ENCODE measurements at regions of chr2 and their contacts with region 1.

Region 1: GRCh38 chr2:102240640-102241370 is 54.0 kb downstream of the IL1RL2 start:
- DNase-seq: peak; percentile 92
- ATAC-seq: peak; percentile 97
- H3K4me3 Mint-ChIP-seq: peak overlapping the region; percentile 16
- H3K27ac Mint-ChIP-seq: peak overlapping the region; percentile 71
- H3K4me1 Mint-ChIP-seq: peaks cover 38% of the 10 kb centered on the region
- H3K27me3 Mint-ChIP-seq: no peaks in the 10 kb centered on the region

Region 2: DNA sequence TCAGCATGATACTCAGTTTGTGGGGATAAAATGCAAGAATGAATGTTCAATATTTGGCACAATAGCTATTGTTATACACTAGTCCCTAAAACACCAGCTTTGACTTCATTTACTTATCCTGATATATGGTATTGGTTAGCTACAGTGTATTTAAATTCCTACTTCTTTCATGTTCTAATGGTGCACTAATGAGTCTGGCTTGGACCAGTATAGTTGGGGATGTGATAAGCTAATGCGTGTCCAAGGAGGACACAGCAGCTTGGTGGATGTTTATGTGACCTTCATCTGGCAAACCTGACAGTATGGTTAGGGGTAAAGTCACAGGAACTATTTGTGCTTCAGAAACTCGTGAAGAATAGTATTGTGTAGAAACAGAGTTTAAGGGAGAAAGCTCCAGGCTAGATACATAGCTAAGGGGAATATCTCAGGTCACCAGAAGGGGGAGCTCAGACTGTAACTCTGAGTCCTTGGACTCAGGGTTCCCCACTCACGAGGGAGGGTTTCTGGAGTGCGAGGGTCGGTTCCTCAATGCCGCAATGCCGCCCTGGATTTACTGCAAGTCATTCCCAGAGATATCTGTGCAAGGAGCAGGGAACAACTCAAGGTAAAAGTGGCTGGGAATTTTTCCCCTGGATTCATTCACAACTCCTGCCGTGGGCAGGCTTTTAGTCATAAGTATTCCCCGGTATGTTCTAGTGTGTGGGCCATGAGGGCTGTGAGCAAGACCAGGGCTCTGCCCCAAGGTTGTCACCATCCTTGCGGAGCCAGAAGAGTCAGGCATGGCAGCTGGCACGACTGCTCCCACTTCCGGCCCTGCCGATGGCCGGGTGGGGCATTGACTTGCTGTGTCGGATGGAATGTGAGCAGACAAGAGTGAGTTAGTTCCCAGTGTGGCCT is 234.6 kb before region 1 on chr2:
- CTCF ChIA-PET with region 1: interaction called, 77 read pairs
- POLR2A ChIA-PET with region 1: no interaction called
- DNase-seq: peak; percentile 49
- ATAC-seq: peak; percentile 57
- H3K4me3 Mint-ChIP-seq: no peak overlapping the region
- H3K27ac Mint-ChIP-seq: no peak overlapping the region
- H3K4me1 Mint-ChIP-seq: no peaks in the 10 kb centered on the region
- H3K27me3 Mint-ChIP-seq: peaks cover 2% of the 10 kb centered on the region

Region 3: DNA sequence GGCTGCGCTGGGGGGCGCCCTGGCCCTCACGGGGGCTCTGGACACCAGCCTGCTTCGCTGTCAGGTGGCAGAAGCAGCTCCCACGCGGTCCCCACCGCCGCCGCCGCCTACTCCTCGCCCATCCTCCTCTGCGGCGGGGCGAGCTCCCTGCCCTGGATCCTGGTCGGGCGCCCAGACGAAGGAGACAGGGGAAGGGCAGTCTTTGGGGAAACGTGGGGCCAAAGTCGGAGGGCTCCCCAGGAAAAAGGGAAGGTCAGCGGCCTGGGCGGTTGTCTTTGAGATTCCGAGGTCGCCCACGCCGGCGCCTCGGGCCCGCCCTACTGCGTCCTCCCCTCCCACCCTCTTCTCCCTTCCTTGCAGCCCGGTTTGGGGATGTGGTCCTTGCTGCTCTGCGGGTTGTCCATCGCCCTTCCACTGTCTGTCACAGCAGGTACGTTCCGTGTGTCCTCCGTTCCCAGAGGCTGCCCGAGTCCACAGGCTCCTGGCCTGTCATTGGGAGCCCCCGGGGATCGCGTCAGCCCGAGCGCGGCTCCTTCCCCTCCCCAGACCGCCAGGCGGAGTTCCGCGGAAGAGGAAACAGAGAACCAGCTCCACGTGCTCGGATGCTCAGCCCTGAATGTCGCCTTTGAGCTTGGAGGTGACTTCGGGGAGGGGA is 53.2 kb before region 1 on chr2:
- CTCF ChIA-PET with region 1: interaction called, 25 read pairs
- POLR2A ChIA-PET with region 1: no interaction called
- DNase-seq: peak; percentile 28
- ATAC-seq: peak; percentile 80
- H3K4me3 Mint-ChIP-seq: peak overlapping the region; percentile 74
- H3K27ac Mint-ChIP-seq: no peak overlapping the region
- H3K4me1 Mint-ChIP-seq: peaks cover 12% of the 10 kb centered on the region
- H3K27me3 Mint-ChIP-seq: peaks cover 19% of the 10 kb centered on the region

Region 4: DNA sequence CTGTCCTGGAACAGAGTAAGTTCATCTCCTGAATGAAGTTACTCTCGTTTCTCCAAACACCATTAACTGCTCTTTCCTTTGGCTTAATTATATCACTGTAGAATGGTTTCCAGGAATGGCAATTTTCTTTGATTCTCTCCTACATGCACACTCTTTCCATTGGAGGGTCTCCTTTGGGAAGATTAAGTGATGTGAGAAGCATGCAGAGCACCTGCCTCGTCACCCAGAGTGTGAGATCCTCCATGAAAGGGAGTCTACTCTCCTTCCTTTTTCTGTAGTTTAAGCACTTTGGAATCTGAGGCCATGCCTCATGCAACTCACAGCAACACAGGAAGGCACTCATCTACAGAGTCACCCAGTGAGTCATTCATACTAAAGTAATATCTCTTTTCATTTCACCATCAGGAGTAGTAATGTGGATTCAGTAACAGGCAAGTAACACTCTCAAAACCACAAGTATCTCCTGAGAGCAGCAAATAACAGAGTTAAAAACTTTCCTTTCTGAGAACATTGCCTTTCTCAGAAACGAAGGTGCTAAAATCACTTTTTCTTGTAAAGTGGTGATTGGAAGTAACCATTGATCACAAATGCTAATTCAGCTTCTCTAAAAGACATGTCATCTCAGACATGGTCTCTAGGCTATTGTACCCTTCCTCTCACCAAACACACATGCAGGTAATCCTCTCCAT is 17.7 kb after region 1 on chr2:
- CTCF ChIA-PET with region 1: interaction called, 25 read pairs
- POLR2A ChIA-PET with region 1: no interaction called
- DNase-seq: peak; percentile 50
- ATAC-seq: peak; percentile 88
- H3K4me3 Mint-ChIP-seq: peak overlapping the region; percentile 1
- H3K27ac Mint-ChIP-seq: peak overlapping the region; percentile 97
- H3K4me1 Mint-ChIP-seq: peaks cover 53% of the 10 kb centered on the region
- H3K27me3 Mint-ChIP-seq: no peaks in the 10 kb centered on the region

Region 5: GRCh38 chr2:102336502-102336945 is 95.7 kb after region 1 on chr2:
- CTCF ChIA-PET with region 1: interaction called, 17 read pairs
- POLR2A ChIA-PET with region 1: interaction called, 3 read pairs
- DNase-seq: no peak
- ATAC-seq: no peak
- H3K4me3 Mint-ChIP-seq: no peak overlapping the region
- H3K27ac Mint-ChIP-seq: no peak overlapping the region
- H3K4me1 Mint-ChIP-seq: peaks cover 39% of the 10 kb centered on the region
- H3K27me3 Mint-ChIP-seq: peaks cover 2% of the 10 kb centered on the region

Region 6: GRCh38 chr2:102460467-102460866 is 219.7 kb after region 1 on chr2:
- CTCF ChIA-PET with region 1: interaction called, 10 read pairs
- POLR2A ChIA-PET with region 1: no interaction called
- DNase-seq: no peak
- ATAC-seq: no peak
- H3K4me3 Mint-ChIP-seq: no peak overlapping the region
- H3K27ac Mint-ChIP-seq: no peak overlapping the region
- H3K4me1 Mint-ChIP-seq: peaks cover 1% of the 10 kb centered on the region
- H3K27me3 Mint-ChIP-seq: peaks cover 31% of the 10 kb centered on the region

Measured in activated CD8-positive, alpha-beta T cell treated with anti-CD3 and anti-CD28 coated beads, Interleukin-2, amount 10 ng/mL, durations not matched to agents 7 days and 5 days (primary cell).